Adrenal gland (tissue), 19 donors: ENCODE measurements at regions of chr1 and their contacts with region 1.

Region 1: DNA sequence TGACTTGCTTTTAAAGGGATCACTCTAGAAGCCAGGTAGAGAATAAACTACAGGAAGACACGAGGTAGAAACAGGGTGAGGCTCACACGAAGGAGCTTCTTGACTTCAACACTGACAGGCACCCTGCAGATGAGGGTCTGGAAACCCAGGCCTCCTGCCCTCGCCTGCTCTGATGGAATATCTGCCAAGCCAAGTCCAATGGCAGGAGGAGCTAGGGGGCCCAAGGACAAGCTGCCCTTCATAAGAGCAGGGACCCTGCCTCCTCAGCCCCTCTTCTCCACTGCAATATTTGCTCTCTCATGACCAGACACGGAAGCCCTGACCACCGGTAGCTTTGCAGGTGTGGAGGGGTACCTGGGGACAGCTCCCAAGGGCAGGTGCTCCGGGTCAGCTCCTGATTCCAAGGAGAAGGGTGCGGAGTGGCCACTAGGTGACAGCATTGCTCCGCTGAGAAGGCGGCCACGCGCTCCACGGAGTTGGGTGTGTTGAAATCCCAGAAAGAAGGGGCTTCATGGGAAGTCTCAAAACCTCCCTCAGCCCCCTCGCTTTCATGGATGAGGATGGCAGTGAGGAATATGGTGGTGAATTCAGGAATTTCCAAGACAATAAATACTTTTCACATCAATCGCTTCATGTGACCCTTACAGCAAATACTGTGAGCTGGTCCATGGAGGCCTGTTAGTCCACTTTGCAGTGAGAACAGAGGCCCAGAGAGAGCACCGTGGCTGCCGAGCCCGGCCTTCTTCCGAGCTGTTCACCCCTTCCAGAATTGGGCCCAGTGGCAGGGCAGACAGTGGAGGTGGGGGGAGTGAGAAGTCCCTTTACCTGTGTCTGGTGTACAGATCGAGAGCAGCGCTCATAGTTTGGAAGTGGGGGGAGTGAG is 33.2 kb upstream of the PAX7 start:
- DNase-seq: peak; percentile 38 to 72 (median 54)
- H3K4me3 ChIP-seq: no peak overlapping the region
- H3K27ac ChIP-seq: no peak overlapping the region
- H3K4me1 ChIP-seq: no peaks in the 10 kb centered on the region
- H3K27me3 ChIP-seq: peaks cover 11% of the 10 kb centered on the region
- CTCF ChIP-seq: peak; percentile 81 to 97 (median 93)
- POLR2A ChIP-seq: no peak

Region 2: GRCh38 chr1:18681423-18681835 is 84.0 kb after region 1 on chr1:
- intact Hi-C with region 1: loop called (anchors 5 to 10 kb)
- DNase-seq: peak in 3 of 7 donors; percentile 21 to 37 (median 24)
- H3K4me3 ChIP-seq: no peak overlapping the region
- H3K27ac ChIP-seq: no peak overlapping the region
- H3K4me1 ChIP-seq: no peaks in the 10 kb centered on the region
- H3K27me3 ChIP-seq: peaks cover 14% of the 10 kb centered on the region
- CTCF ChIP-seq: peak; percentile 39 to 65 (median 52)
- POLR2A ChIP-seq: no peak

Region 3: GRCh38 chr1:18686540-18686939 is 89.1 kb after region 1 on chr1:
- intact Hi-C with region 1: loop called (anchors 5 to 10 kb)
- DNase-seq: no peak
- H3K4me3 ChIP-seq: no peak overlapping the region
- H3K27ac ChIP-seq: no peak overlapping the region
- H3K4me1 ChIP-seq: no peaks in the 10 kb centered on the region
- H3K27me3 ChIP-seq: peaks cover 10% of the 10 kb centered on the region
- CTCF ChIP-seq: no peak
- POLR2A ChIP-seq: no peak

Region 4: DNA sequence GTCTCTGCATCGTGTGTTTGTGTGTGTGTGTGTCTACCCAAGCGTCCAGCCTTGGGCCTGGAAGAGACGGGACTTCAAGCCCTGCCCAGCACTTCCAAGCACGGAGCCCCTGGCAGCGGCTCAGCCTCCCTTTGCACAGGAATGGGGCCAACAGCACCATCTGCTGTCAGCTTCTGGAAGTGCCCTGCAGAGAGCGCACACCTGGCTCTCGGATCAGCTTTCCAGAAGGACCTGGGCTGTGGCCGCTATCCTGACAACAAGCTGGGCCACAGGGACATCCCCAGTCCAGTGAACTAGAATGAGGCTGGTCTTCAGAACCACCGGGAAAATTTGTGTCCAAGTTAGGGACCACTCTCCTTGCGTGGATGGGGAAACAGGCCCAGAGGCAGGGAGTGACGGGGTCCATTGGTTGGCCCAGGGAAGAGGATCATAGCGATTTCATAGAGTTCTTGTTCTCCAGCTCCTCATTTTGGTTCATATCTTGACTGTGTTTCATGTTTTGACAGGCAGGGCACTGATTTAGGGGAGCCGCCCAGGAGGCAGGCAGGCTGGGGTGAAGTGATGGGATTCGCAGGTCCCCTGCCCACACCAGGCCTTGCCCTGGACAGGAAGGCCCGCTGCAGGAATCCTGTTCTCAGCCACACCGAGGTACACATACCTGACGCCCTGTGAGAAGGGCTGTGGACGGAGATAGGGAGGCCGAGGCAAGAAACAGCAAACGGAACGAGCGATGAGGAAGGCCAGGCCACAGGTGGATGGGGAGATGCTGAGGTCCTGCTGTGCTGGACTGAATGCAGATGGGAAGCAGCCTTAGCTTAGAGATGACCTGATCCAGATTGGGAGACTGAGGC is 223.6 kb after region 1 on chr1:
- intact Hi-C with region 1: loop called (anchors 2 to 5 kb)
- DNase-seq: peak; percentile 66 to 88 (median 80)
- H3K4me3 ChIP-seq: no peak overlapping the region
- H3K27ac ChIP-seq: no peak overlapping the region
- H3K4me1 ChIP-seq: no peaks in the 10 kb centered on the region
- H3K27me3 ChIP-seq: peaks cover 12% of the 10 kb centered on the region
- CTCF ChIP-seq: peak; percentile 79 to 91 (median 84)
- POLR2A ChIP-seq: no peak

Region 5: DNA sequence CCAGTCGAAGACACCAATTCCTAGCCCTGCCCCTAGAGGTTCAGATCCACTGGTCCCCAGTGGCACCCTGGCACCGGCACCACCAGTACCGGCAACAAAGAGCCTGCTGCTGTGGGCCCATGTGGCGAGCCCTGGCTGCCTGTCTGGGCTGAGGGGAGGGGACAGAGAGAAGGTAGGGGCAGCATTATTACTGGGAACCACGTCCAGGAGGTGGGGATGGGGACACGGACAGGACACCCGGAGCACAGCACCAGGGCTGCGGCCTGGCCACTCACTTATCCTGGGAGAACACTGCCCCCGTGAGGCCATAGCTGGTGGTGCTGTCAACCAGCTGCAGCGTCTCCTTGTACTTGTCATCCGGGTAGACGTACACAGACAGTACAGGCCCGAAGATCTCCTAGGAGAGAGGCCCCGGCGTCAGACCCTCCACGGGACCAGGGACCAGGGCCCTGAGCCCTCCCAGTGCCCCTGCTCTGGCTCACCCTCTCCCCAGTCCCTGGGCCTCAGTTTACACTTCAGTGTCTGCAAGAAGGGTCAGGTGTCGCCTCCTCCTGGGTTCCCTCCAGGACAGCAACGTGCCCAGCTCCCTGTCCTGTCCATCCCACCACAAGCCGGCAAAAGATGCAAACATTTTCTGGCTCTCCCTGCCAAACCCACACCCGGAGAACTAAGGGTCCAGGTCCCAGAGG is 277.9 kb after region 1 on chr1:
- intact Hi-C with region 1: loop called (anchors 5 kb)
- DNase-seq: peak; percentile 84 to 96 (median 93)
- H3K4me3 ChIP-seq: no peak overlapping the region
- H3K27ac ChIP-seq: no peak overlapping the region
- H3K4me1 ChIP-seq: no peaks in the 10 kb centered on the region
- H3K27me3 ChIP-seq: no peaks in the 10 kb centered on the region
- CTCF ChIP-seq: peak; percentile 74 to 91 (median 82)
- POLR2A ChIP-seq: no peak